Mammary epithelial cell (primary cell): ENCODE measurements at regions of chr14 and their contacts with region 1.

Region 1: GRCh38 chr14:77212943-77213678 is 31.5 kb downstream of the TMEM63C start:
- DNase-seq: peak; percentile 60
- H3K4me3 ChIP-seq: no peak overlapping the region
- H3K27ac ChIP-seq: no peak overlapping the region
- H3K4me1 ChIP-seq: no peaks in the 10 kb centered on the region
- H3K27me3 ChIP-seq: peaks cover 3% of the 10 kb centered on the region
- CTCF ChIP-seq: peak; percentile 81 to 97

Region 2: GRCh38 chr14:75864352-75864751 is 1348.8 kb before region 1 on chr14:
- CTCF ChIA-PET with region 1: no interaction called
- dilution Hi-C with region 1: no loop called
- in situ Hi-C with region 1: no loop called
- intact Hi-C with region 1: no loop called
- DNase-seq: peak; percentile 94
- H3K4me3 ChIP-seq: no peak overlapping the region
- H3K27ac ChIP-seq: peak overlapping the region; percentile 76
- H3K4me1 ChIP-seq: peaks cover 67% of the 10 kb centered on the region
- H3K27me3 ChIP-seq: no peaks in the 10 kb centered on the region
- CTCF ChIP-seq: no peak

Region 3: GRCh38 chr14:77124345-77125280 is 88.5 kb before region 1 on chr14:
- CTCF ChIA-PET with region 1: interaction called, 3 read pairs
- dilution Hi-C with region 1: loop called (anchors 5 kb)
- in situ Hi-C with region 1: no loop called
- intact Hi-C with region 1: no loop called
- DNase-seq: peak; percentile 8
- H3K4me3 ChIP-seq: peak overlapping the region in 2 of 3 experiments; percentile 37 to 40
- H3K27ac ChIP-seq: no peak overlapping the region
- H3K4me1 ChIP-seq: peaks cover 32% of the 10 kb centered on the region
- H3K27me3 ChIP-seq: no peaks in the 10 kb centered on the region
- CTCF ChIP-seq: peak; percentile 34 to 42

Region 4: DNA sequence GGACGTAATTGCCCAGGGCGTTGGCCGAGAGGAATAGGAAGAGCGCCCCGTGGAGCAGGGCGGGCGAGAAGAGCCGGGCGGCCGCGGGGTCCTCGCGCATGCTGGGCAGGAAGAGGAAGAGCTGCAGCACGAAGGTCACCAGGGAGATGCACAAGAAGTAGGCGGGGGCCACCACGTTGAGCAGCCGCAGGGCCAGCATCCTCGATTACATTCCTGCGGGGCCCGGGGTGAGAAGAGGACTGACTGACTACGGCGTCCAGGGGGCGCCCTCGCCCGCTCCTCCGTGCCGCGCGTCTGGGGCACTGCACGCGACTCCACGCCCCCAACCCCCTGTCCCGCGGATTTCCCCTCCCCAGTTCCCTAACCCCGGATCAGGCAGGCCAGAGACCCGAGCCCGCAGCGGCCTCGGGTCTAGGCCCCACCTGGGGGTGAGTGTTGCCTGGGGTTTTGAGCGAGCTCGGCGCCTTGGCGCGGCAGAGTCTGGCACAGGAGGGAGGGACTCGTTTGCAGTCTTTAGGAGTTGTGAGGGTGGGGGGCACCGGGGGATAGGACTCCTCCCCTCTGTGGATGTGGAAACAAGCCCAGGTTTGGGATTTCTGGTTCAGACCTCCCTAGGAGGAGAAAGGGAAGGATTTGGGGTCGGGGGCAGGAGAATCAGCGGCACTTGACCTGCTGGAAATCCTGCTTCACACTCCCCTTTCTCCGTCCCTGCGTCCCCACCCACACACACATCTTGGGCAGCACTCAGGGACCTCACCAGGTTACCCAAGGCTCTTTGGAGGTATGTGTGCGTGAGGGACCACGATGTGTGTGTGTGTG is 73.4 kb before region 1 on chr14:
- CTCF ChIA-PET with region 1: no interaction called
- dilution Hi-C with region 1: no loop called
- in situ Hi-C with region 1: no loop called
- intact Hi-C with region 1: loop called (anchors 5 kb)
- DNase-seq: no peak
- H3K4me3 ChIP-seq: no peak overlapping the region
- H3K27ac ChIP-seq: no peak overlapping the region
- H3K4me1 ChIP-seq: peaks cover 15% of the 10 kb centered on the region
- H3K27me3 ChIP-seq: peaks cover 29% of the 10 kb centered on the region
- CTCF ChIP-seq: peak in 1 of 2 donors; percentile 52

Region 5: GRCh38 chr14:77181603-77182437 is 31.3 kb before region 1 on chr14 and contains the start of gene TMEM63C:
- CTCF ChIA-PET with region 1: no interaction called
- dilution Hi-C with region 1: no loop called
- in situ Hi-C with region 1: no loop called
- intact Hi-C with region 1: loop called (anchors 2 kb)
- DNase-seq: peak; percentile 83
- H3K4me3 ChIP-seq: peak within 1 kb of the TSS; percentile 61 to 78 (median 70)
- H3K27ac ChIP-seq: no peak within 1 kb of the TSS
- H3K4me1 ChIP-seq: peaks cover 27% of the 10 kb centered on the region
- H3K27me3 ChIP-seq: no peaks in the 10 kb centered on the region
- CTCF ChIP-seq: peak in 1 of 2 donors; percentile 16
- total RNA-seq, gene TMEM63C: 6.3 to 8.3 TPM

Region 6: DNA sequence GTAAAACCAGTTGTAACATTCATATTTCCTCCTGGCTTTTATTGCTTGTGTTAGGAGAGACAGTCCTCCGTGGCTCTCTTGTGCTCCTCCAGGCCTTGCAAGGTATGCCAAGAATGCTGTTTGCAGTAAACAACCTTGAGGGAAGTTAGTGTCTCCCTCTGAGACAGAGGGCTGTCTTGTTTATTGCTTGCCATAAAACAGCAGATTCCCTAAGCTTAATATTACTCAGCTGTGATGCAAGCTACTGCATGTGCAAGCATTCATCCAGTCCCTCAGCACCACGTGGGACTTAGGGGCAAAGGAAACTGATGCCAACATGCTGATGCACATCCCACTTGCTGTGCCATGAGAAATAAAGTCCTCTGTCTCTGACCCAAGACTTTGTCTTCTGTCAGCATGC is 100.9 kb after region 1 on chr14:
- CTCF ChIA-PET with region 1: interaction called, 7 read pairs
- dilution Hi-C with region 1: no loop called
- in situ Hi-C with region 1: no loop called
- intact Hi-C with region 1: loop called (anchors 5 kb)
- DNase-seq: peak; percentile 93
- H3K4me3 ChIP-seq: no peak overlapping the region
- H3K27ac ChIP-seq: peak overlapping the region; percentile 31
- H3K4me1 ChIP-seq: peaks cover 45% of the 10 kb centered on the region
- H3K27me3 ChIP-seq: no peaks in the 10 kb centered on the region
- CTCF ChIP-seq: no peak